Heart right ventricle (tissue), 16 donors: ENCODE measurements at regions of chr12 and their contacts with region 1.

Region 1: DNA sequence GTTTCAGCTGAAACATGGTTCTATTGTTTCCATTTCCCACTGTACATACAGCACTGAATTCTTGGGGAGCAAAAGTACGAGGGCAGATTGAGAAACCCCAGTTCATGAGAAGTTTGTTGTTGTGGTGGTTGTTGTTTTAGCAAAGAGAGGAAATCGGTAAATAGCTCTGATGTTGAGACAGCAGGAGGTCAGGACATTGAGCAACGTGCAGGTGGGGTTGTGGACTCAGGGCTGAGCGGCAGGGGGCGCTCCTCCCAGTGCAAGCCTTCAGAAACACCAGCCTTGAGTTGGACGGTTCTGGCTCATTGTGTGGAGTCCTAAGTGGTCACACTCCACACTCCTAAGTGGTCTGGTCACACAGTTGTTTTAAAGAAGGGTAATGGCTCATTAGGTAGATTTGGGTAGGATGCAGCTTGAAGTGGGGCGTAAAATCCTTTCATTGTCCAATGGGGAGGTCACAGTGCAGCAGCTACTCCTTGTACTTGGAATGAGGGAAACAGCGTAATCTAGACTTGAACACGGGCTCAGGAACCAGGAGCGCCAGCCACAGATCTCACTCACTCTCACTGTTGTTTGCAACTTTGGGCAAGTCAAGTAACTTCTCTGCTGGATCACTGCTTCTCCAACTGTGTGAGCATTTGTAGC is 14.5 kb upstream of the PWP1 start:
- DNase-seq: no peak
- ATAC-seq: no peak
- H3K4me3 ChIP-seq: no peak overlapping the region
- H3K27ac ChIP-seq: no peak overlapping the region
- H3K4me1 ChIP-seq: no peaks in the 10 kb centered on the region
- H3K27me3 ChIP-seq: peaks cover 0 to 52% (median 36%) of the 10 kb centered on the region in 7 donors
- CTCF ChIP-seq: peak in 7 of 9 donors; percentile 40 to 72 (median 56)

Region 2: DNA sequence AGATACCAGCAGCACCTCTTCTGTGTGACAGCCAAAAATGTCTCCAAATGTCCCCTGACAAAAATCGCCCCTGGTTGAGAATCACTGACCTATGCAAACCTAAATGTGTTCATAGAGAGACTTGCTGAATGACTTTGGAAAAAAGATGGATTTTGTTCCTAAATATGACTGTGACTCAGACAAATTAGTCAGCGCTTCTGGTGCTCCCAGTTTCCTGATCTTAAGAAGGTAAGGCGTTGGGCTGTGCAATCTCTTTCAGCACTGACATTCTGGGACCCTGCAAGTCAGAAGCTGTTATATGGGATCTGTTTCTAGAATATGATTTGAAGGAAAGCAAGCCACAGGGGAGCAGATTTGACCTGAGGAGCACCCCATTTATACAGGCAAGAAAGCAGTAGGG is 76.1 kb before region 1 on chr12:
- intact Hi-C with region 1: no loop called
- DNase-seq: no peak
- ATAC-seq: no peak
- H3K4me3 ChIP-seq: no peak overlapping the region
- H3K27ac ChIP-seq: no peak overlapping the region
- H3K4me1 ChIP-seq: peaks cover 0 to 9% (median 0%) of the 10 kb centered on the region in 9 donors
- H3K27me3 ChIP-seq: no peaks in the 10 kb centered on the region
- CTCF ChIP-seq: no peak

Region 3: GRCh38 chr12:107884769-107885694 is 213.9 kb after region 1 on chr12:
- intact Hi-C with region 1: loop called in 9 of 10 experiments (anchors 5 to 10 kb)
- DNase-seq: peak; percentile 23 to 38
- ATAC-seq: peak in 3 of 8 donors; percentile 17 to 58 (median 34)
- H3K4me3 ChIP-seq: no peak overlapping the region
- H3K27ac ChIP-seq: no peak overlapping the region
- H3K4me1 ChIP-seq: no peaks in the 10 kb centered on the region
- H3K27me3 ChIP-seq: peaks cover 0 to 58% (median 25%) of the 10 kb centered on the region in 7 donors
- CTCF ChIP-seq: peak; percentile 18 to 76 (median 71)